H1 (cell line): ENCODE measurements at regions of chr20 and their contacts with region 1.

Region 1: GRCh38 chr20:21640561-21641182 is 64.8 kb upstream of the PAX1 start:
- DNase-seq: peak; percentile 38 to 61
- H3K4me3 ChIP-seq: no peak overlapping the region
- H3K27ac ChIP-seq: no peak overlapping the region
- H3K4me1 ChIP-seq: no peaks in the 10 kb centered on the region; a peak in 1 of 7 replicates
- H3K27me3 ChIP-seq: peaks cover 0 to 2% (median 1%) of the 10 kb centered on the region in 4 experiments; a peak in 2 of 7 replicates
- CTCF ChIP-seq: peak; percentile 51 to 88 (median 82)
- EP300 ChIP-seq: no peak
- POLR2A ChIP-seq: no peak
- RAD21 ChIP-seq: peak; percentile 90 to 93

Region 2: DNA sequence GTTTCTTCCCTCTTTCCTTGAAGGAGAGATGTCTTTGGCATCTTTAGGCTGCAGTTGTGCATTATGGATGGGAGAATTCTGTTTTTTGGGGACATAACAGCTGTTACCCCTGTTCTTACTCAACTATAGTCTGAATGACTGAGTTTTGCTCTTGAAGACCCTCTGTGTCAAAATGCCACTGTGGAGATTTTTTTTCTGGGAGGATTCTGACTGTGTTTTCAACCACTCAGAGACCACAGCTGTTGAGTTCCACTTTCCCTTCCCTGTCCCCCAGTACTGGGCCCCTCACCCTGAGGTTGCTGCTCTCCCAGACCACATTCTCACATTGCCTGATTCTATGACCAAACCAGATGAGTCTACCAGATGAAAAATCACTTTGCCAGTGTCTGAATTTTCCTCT is 174.9 kb before region 1 on chr20:
- CTCF ChIA-PET with region 1: no interaction called
- POLR2A ChIA-PET with region 1: no interaction called
- DNase-seq: no peak
- H3K4me3 ChIP-seq: no peak overlapping the region
- H3K27ac ChIP-seq: no peak overlapping the region
- H3K4me1 ChIP-seq: no peaks in the 10 kb centered on the region
- H3K27me3 ChIP-seq: no peaks in the 10 kb centered on the region
- CTCF ChIP-seq: no peak
- EP300 ChIP-seq: no peak
- POLR2A ChIP-seq: no peak
- RAD21 ChIP-seq: no peak

Region 3: GRCh38 chr20:21656308-21657073 is 15.8 kb after region 1 on chr20:
- CTCF ChIA-PET with region 1: interaction called, 16 read pairs
- POLR2A ChIA-PET with region 1: no interaction called
- DNase-seq: no peak
- H3K4me3 ChIP-seq: no peak overlapping the region
- H3K27ac ChIP-seq: no peak overlapping the region
- H3K4me1 ChIP-seq: no peaks in the 10 kb centered on the region
- H3K27me3 ChIP-seq: no peaks in the 10 kb centered on the region
- CTCF ChIP-seq: no peak
- EP300 ChIP-seq: no peak
- POLR2A ChIP-seq: no peak
- RAD21 ChIP-seq: no peak

Region 4: DNA sequence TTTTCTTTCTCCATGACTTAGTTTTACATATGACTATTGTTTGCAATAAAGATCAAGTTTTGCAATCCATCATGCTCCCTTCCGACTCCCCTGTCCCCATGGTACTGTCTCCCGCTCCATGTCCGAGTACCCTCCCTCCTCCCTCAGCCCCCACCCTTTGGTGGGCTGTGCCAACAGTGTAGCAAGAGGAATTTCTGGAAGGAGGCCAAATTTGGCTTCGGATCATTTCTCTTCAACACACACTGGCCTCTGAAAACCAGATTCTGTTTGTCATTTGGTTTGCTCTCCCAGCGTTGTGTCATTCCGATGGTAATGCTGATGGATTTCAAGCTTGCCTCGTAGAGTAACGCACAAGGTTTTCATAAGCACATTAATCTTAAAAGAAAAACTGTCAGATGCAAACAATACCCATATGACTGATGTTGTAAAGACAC is 41.9 kb after region 1 on chr20:
- CTCF ChIA-PET with region 1: interaction called, 77 read pairs
- POLR2A ChIA-PET with region 1: no interaction called
- DNase-seq: no peak
- H3K4me3 ChIP-seq: no peak overlapping the region
- H3K27ac ChIP-seq: no peak overlapping the region
- H3K4me1 ChIP-seq: no peaks in the 10 kb centered on the region
- H3K27me3 ChIP-seq: no peaks in the 10 kb centered on the region
- CTCF ChIP-seq: no peak
- EP300 ChIP-seq: no peak
- POLR2A ChIP-seq: no peak
- RAD21 ChIP-seq: no peak

Region 5: DNA sequence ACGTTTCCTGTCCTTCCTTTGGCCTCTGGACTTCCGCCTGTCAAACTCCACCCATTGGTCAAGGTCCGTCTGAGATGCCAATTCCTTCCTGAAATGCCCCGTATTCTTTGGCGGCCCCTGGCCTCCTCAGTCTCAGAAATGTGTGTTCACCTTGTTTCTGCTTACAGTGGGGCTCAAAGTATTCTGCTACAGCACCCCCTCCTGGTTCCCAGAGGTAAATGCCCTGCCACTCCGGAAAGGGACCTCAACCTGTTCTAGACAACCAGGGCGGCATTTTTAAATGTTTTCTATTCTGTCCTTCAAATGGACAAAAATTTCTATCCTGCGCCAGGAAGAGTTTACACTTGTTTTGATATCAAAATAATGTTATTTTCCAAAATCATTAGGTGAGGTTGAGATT is 52.6 kb after region 1 on chr20:
- CTCF ChIA-PET with region 1: interaction called, 77 read pairs
- POLR2A ChIA-PET with region 1: no interaction called
- DNase-seq: peak in 1 of 2 experiments; percentile 79
- H3K4me3 ChIP-seq: no peak overlapping the region
- H3K27ac ChIP-seq: no peak overlapping the region
- H3K4me1 ChIP-seq: peaks cover 0 to under 1% (median under 1%) of the 10 kb centered on the region in 4 experiments; a peak in 3 of 7 replicates
- H3K27me3 ChIP-seq: peaks cover 13 to 43% (median 32%) of the 10 kb centered on the region in 4 experiments
- CTCF ChIP-seq: peak; percentile 69 to 78 (median 71)
- EP300 ChIP-seq: no peak
- POLR2A ChIP-seq: no peak
- RAD21 ChIP-seq: peak; percentile 63 to 69

Region 6: GRCh38 chr20:21702553-21703470 is 62.1 kb after region 1 on chr20:
- CTCF ChIA-PET with region 1: interaction called, 49 read pairs
- POLR2A ChIA-PET with region 1: no interaction called
- DNase-seq: peak in 1 of 2 experiments; percentile 98
- H3K4me3 ChIP-seq: peak overlapping the region; percentile 1 to 52 (median 26); a peak in 7 of 8 replicates
- H3K27ac ChIP-seq: no peak overlapping the region
- H3K4me1 ChIP-seq: peaks cover 5 to 31% (median 18%) of the 10 kb centered on the region in 4 experiments
- H3K27me3 ChIP-seq: peaks cover 95 to 100% (median 99%) of the 10 kb centered on the region in 4 experiments
- CTCF ChIP-seq: peak; percentile 68 to 81 (median 77)
- EP300 ChIP-seq: no peak
- POLR2A ChIP-seq: no peak
- RAD21 ChIP-seq: peak; percentile 69 to 74

Region 7: DNA sequence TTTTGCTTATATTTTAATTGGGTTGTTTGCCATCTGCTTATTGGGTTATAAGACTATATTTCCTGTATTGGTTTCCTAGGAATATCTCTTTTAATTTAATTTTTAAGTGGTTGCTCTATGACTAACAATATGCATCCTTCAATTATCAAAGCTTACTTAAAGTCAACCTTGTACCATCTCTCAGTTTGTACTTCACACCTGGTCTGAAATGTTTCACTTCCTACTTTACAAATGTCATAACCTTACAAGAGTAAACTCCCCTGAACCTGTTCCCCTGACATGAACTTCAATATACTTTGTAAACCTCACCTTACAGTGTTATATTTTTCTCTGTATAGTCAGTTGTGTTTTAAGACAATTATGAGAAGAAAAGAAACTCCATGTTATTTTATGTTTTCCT is 100.6 kb after region 1 on chr20:
- CTCF ChIA-PET with region 1: no interaction called
- POLR2A ChIA-PET with region 1: no interaction called
- DNase-seq: no peak
- H3K4me3 ChIP-seq: no peak overlapping the region
- H3K27ac ChIP-seq: no peak overlapping the region
- H3K4me1 ChIP-seq: no peaks in the 10 kb centered on the region
- H3K27me3 ChIP-seq: no peaks in the 10 kb centered on the region
- CTCF ChIP-seq: no peak
- EP300 ChIP-seq: no peak
- POLR2A ChIP-seq: no peak
- RAD21 ChIP-seq: no peak